Natural killer cell (primary cell): ENCODE measurements at regions of chr2 and their contacts with region 1.

Region 1: DNA sequence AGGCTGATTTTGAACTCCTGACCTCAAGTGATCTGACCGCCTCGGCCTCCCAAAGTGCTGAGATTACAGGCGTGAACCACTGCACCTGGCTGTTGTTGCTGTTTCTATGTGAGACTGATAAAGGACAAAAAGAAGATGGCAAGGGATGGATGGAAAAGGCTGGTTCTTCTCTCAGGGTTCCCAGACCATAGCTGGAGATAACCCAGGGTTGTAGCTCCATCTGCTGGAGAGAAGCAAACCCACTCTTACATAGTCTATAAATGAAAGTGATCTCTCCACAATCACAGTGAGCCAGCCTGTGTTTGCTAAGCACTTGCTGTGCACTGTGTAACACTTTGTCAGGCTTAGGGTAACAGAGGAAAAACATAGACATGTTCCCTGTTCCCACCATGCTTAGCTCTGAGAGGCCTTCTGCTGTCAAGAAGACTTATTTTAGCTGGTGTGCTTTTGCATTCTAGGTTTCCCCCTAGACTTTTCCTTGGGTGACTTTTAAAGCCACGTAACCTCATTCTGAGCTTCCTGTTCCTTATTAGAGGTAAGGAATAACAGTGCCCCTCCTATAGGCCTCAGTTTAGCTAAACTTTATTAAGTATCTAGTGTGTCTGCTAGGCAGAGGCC is 49.7 kb downstream of the LIMS1 start:
- DNase-seq: peak; percentile 26 to 80
- ATAC-seq: peak; percentile 86 to 94 (median 87)
- H3K4me3 ChIP-seq: no peak overlapping the region
- H3K4me3 Mint-ChIP-seq: no peak overlapping the region
- H3K27ac ChIP-seq: no peak overlapping the region
- H3K27ac Mint-ChIP-seq: peak overlapping the region in 1 of 2 donors; percentile 13
- H3K4me1 ChIP-seq: peaks cover 8% of the 10 kb centered on the region
- H3K4me1 Mint-ChIP-seq: peaks cover 26 to 36% of the 10 kb centered on the region in 2 donors
- H3K27me3 ChIP-seq: no peaks in the 10 kb centered on the region
- H3K27me3 Mint-ChIP-seq: no peaks in the 10 kb centered on the region
- CTCF ChIP-seq: peak; percentile 74

Region 2: GRCh38 chr2:108351889-108352288 is 232.1 kb before region 1 on chr2:
- intact Hi-C with region 1: loop called (anchors 1 kb)
- DNase-seq: no peak
- ATAC-seq: no peak
- H3K4me3 ChIP-seq: no peak overlapping the region
- H3K4me3 Mint-ChIP-seq: no peak overlapping the region
- H3K27ac ChIP-seq: no peak overlapping the region
- H3K27ac Mint-ChIP-seq: no peak overlapping the region
- H3K4me1 ChIP-seq: no peaks in the 10 kb centered on the region
- H3K4me1 Mint-ChIP-seq: no peaks in the 10 kb centered on the region
- H3K27me3 ChIP-seq: no peaks in the 10 kb centered on the region
- H3K27me3 Mint-ChIP-seq: no peaks in the 10 kb centered on the region
- CTCF ChIP-seq: no peak

Region 3: DNA sequence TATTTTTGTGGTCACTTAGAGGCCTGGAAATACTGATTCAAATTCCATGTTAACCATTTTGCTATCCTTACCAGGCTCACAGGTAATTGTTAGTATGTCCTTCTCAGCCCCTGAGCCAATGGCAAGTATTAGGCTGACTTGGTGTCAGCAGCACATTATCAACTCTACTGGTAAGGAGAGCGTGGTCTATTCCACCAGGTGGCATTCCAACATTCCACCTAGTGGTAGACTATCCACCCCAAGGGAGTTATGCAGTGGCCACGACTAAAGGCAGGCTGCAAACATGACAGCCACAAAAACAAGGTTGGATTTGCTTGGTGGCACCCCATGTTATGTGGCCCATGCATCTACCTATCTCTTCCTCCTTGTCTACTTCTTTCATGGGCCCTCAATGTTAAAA is 166.8 kb before region 1 on chr2:
- intact Hi-C with region 1: no loop called
- DNase-seq: peak in 1 of 2 donors; percentile 29
- ATAC-seq: no peak
- H3K4me3 ChIP-seq: no peak overlapping the region
- H3K4me3 Mint-ChIP-seq: no peak overlapping the region
- H3K27ac ChIP-seq: no peak overlapping the region
- H3K27ac Mint-ChIP-seq: no peak overlapping the region
- H3K4me1 ChIP-seq: no peaks in the 10 kb centered on the region
- H3K4me1 Mint-ChIP-seq: no peaks in the 10 kb centered on the region
- H3K27me3 ChIP-seq: no peaks in the 10 kb centered on the region
- H3K27me3 Mint-ChIP-seq: peaks cover 0 to 4% of the 10 kb centered on the region in 2 donors
- CTCF ChIP-seq: no peak